ENCODE measurements at regions of chr6 and their contacts with region 1.

Region 1: GRCh38 chr6:157535339-157536222 is 154.6 kb downstream of the ZDHHC14 start:
- DNase-seq: peak; percentile 8
- H3K4me3 Mint-ChIP-seq: peak overlapping the region; percentile 2
- H3K27ac Mint-ChIP-seq: peak overlapping the region; percentile 73
- H3K4me1 Mint-ChIP-seq: peaks cover 55% of the 10 kb centered on the region
- H3K27me3 Mint-ChIP-seq: peaks cover 8% of the 10 kb centered on the region

Region 2: GRCh38 chr6:157099912-157100593 is 435.5 kb before region 1 on chr6:
- intact Hi-C with region 1: loop called (anchors 1 kb)
- DNase-seq: peak; percentile 58
- H3K4me3 Mint-ChIP-seq: peak overlapping the region; percentile 63
- H3K27ac Mint-ChIP-seq: peak overlapping the region; percentile 86
- H3K4me1 Mint-ChIP-seq: peaks cover 57% of the 10 kb centered on the region
- H3K27me3 Mint-ChIP-seq: no peaks in the 10 kb centered on the region

Region 3: GRCh38 chr6:157379656-157380454 is 155.7 kb before region 1 on chr6:
- intact Hi-C with region 1: loop called (anchors 1 kb)
- DNase-seq: peak; percentile 86
- H3K4me3 Mint-ChIP-seq: peak overlapping the region; percentile 88
- H3K27ac Mint-ChIP-seq: peak overlapping the region; percentile 83
- H3K4me1 Mint-ChIP-seq: peaks cover 39% of the 10 kb centered on the region
- H3K27me3 Mint-ChIP-seq: peaks cover 6% of the 10 kb centered on the region

Region 4: DNA sequence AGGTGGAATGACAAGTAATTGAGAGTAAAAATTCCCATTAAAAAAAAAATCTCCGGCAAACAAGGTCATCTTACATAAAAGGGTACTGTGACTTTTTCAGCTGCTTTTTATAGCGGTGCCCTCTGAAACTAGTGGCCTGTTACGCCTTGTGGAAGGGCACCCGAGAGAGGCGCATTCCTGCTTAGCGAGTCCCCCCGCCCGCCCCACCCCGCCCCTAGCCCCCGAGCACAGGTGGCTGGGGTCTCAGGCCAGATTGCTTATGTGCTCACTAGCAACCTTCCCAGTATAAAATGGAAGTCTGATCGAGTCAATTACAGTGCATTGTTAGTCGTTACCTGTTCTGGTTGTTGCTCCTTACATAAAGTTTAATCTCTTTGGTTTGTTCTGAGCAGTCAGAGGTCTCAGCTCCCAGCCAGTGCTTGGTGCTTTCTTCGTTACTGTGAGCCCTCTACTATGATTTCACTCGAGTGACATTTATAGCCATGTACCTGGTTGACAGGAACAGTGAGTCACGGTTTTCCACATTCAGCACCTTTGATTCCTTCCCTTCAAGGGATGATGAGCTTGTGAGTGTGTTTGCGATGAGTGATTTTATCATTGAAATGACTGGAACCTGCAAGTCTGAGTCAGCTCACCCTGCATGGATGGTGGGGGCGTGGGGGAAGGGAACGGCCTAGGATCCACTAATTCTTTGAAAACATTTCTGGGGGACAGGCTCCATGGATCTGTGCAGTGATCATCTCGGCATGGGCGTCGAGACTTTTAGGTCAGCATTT is 107.0 kb before region 1 on chr6:
- intact Hi-C with region 1: loop called (anchors 1 kb)
- DNase-seq: no peak
- H3K4me3 Mint-ChIP-seq: peak overlapping the region; percentile 2
- H3K27ac Mint-ChIP-seq: peak overlapping the region; percentile 77
- H3K4me1 Mint-ChIP-seq: peaks cover 43% of the 10 kb centered on the region
- H3K27me3 Mint-ChIP-seq: peaks cover 3% of the 10 kb centered on the region

Region 5: DNA sequence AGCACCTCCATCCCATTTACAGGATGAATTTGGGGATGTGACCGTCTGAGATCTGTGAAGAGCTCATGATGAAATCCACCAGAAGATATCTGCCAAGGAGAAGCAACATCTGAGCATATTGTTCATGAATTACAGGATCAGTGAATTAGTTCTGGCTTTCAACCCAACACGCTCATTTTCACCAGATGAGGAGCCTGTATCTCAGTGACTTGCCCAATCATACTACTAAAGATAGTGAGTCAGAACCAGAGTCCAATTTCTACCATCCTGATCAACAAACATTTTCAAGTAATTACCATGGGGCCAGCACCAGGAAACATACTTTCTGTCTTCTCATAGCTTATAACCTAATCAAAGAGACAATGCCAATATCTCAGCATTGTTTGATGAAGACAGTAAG is 38.0 kb before region 1 on chr6:
- intact Hi-C with region 1: loop called (anchors 1 kb)
- DNase-seq: no peak
- H3K4me3 Mint-ChIP-seq: no peak overlapping the region
- H3K27ac Mint-ChIP-seq: no peak overlapping the region
- H3K4me1 Mint-ChIP-seq: peaks cover 48% of the 10 kb centered on the region
- H3K27me3 Mint-ChIP-seq: peaks cover 7% of the 10 kb centered on the region

Region 6: GRCh38 chr6:157514659-157515496 is 20.7 kb before region 1 on chr6:
- intact Hi-C with region 1: no loop called
- DNase-seq: no peak
- H3K4me3 Mint-ChIP-seq: no peak overlapping the region
- H3K27ac Mint-ChIP-seq: no peak overlapping the region
- H3K4me1 Mint-ChIP-seq: peaks cover 17% of the 10 kb centered on the region
- H3K27me3 Mint-ChIP-seq: no peaks in the 10 kb centered on the region

Region 7: DNA sequence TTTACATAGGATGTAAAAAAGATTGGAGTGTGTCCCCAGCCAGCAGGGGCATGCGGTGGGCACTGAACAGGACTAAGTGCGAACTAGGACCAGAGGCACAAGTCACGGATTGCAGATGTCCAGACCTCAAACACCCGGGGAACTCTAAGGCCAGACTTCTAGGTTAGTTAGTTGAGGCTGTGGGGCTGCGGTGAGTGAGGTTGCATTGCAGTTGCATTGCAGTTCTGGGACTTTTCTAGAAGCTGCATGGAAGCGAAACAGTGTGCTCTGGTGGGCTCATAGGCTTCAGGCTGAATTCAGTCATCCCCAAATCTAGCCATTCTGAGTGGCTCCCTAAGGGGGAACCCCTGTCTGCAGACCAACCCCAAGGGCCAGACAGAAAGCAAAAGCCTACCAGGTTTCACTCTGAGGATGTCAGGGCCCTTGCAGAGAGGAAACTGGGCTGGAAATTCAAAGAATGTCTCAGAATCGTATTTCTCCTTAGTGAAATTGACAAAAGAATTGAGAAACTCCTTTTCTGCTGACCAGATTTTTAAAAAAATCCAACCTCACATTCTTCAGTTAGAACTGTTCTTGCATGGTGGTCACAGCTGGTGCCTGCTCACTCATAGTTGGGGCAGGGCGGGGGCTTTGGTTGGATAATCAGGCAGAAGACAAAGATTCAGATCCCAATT is 28.2 kb after region 1 on chr6:
- intact Hi-C with region 1: loop called (anchors 1 kb)
- DNase-seq: peak; percentile 20
- H3K4me3 Mint-ChIP-seq: no peak overlapping the region
- H3K27ac Mint-ChIP-seq: no peak overlapping the region
- H3K4me1 Mint-ChIP-seq: peaks cover 41% of the 10 kb centered on the region
- H3K27me3 Mint-ChIP-seq: peaks cover 21% of the 10 kb centered on the region

Region 8: GRCh38 chr6:157756708-157757429 is 221.3 kb after region 1 on chr6:
- intact Hi-C with region 1: loop called (anchors 1 kb)
- DNase-seq: peak; percentile 65
- H3K4me3 Mint-ChIP-seq: no peak overlapping the region
- H3K27ac Mint-ChIP-seq: peak overlapping the region; percentile 92
- H3K4me1 Mint-ChIP-seq: peaks cover 85% of the 10 kb centered on the region
- H3K27me3 Mint-ChIP-seq: peaks cover 6% of the 10 kb centered on the region

Measured in activated T-helper 1 cell treated with anti-CD3 and anti-CD28 coated beads, Interleukin-12 subunit alpha, Interleukin-12 subunit beta, Interleukin-2, Interleukin-4 antibody, amounts not matched to agents 30 ng/mL and 10 ng/mL and 1 ng/mL, durations not matched to agents 14 hours and 24 hours and 36 hours (primary cell).